ENCODE measurements at regions of chr11 and their contacts with region 1.

Region 1: DNA sequence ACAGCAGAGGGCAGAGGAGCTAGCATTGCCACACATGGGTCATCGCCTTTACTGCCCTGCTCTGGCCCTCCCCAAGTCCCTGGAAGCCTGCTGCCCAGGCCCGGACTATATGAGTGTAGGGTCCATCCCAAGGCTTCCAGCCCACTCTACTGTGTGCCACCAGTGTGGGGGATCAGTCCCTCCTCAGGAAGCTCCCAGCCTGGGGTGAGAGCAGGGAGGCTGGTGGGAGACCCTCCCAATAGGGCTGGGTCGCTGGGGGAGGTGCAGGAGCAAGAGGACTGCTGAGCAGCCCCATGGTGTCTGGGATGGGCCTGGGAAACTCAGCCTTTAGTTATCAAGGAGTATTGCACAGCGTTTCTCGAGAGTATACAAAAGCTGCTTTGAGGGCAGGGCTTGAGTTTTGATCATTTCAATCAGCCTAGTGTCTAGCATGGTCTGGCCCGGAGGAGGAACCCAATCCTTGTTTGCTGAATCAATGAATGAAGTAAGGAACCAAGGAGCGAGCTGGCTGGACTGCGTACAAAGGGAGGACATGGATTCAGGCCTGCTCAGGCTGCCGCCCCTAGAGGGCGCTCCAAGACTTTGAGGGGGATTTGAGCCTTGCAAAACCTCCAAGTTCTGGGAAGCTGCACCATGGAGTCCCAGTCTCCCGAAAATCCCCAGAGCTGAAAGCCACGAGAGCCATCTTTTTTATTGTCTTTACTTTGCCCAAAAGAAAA is 89.0 kb upstream of the PARVA start:
- DNase-seq: peak; percentile 65
- H3K4me3 Mint-ChIP-seq: no peak overlapping the region
- H3K27ac Mint-ChIP-seq: no peak overlapping the region
- H3K4me1 Mint-ChIP-seq: peaks cover 6% of the 10 kb centered on the region
- H3K27me3 Mint-ChIP-seq: no peaks in the 10 kb centered on the region

Region 2: DNA sequence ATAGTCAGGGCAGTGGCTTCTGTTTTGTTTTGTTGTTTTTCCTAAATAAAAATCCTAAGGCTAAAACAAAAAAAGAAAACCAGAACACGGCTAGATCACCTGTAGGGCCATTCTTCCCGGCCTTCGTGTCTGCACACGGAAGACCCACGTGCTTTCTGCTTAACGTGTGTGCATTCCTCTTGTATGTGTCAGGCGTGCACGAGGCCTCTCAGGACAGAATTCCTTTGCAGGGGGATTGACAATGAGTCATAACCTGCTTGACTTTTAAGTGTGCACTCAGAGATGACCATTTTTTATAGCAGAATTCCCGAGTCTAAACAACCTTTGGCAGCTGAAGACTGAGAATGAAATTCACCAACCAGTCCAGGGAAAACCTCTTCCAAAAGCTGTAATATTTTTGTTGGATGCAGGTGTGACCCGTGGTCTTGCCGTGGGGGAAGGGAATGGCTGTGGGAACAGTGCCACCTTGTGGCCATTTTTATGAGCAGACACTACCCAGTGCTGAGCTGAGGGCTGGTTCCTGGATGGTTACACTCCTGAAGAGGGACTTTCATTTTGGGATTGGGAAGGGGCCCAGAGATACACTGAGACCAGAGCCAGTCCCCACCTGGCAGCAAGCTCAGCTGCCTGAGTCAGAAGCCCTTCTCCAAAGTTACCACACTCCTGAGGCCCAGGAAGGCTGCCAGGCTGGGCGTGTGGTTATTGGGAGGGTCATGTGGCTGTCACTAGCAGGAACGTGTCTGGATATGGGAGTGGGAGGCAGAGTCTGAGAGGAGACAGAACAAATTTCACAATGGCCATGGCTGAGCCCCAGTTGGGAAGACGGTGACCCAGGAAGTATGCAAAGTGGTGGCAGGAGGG is 244.2 kb before region 1 on chr11:
- CTCF ChIA-PET with region 1: interaction called, 418 read pairs
- POLR2A ChIA-PET with region 1: no interaction called
- intact Hi-C with region 1: no loop called
- DNase-seq: peak; percentile 76
- H3K4me3 Mint-ChIP-seq: no peak overlapping the region
- H3K27ac Mint-ChIP-seq: no peak overlapping the region
- H3K4me1 Mint-ChIP-seq: peaks cover 4% of the 10 kb centered on the region
- H3K27me3 Mint-ChIP-seq: peaks cover 1% of the 10 kb centered on the region

Region 3: GRCh38 chr11:12052676-12053605 is 235.4 kb before region 1 on chr11:
- CTCF ChIA-PET with region 1: interaction called, 418 read pairs
- POLR2A ChIA-PET with region 1: no interaction called
- intact Hi-C with region 1: no loop called
- DNase-seq: peak; percentile 44
- H3K4me3 Mint-ChIP-seq: no peak overlapping the region
- H3K27ac Mint-ChIP-seq: no peak overlapping the region
- H3K4me1 Mint-ChIP-seq: no peaks in the 10 kb centered on the region
- H3K27me3 Mint-ChIP-seq: no peaks in the 10 kb centered on the region

Region 4: GRCh38 chr11:12087075-12088004 is 201.0 kb before region 1 on chr11:
- CTCF ChIA-PET with region 1: interaction called, 10 read pairs
- POLR2A ChIA-PET with region 1: no interaction called
- intact Hi-C with region 1: no loop called
- DNase-seq: peak; percentile 64
- H3K4me3 Mint-ChIP-seq: peak overlapping the region; percentile 13
- H3K27ac Mint-ChIP-seq: peak overlapping the region; percentile 68
- H3K4me1 Mint-ChIP-seq: peaks cover 60% of the 10 kb centered on the region
- H3K27me3 Mint-ChIP-seq: no peaks in the 10 kb centered on the region

Region 5: DNA sequence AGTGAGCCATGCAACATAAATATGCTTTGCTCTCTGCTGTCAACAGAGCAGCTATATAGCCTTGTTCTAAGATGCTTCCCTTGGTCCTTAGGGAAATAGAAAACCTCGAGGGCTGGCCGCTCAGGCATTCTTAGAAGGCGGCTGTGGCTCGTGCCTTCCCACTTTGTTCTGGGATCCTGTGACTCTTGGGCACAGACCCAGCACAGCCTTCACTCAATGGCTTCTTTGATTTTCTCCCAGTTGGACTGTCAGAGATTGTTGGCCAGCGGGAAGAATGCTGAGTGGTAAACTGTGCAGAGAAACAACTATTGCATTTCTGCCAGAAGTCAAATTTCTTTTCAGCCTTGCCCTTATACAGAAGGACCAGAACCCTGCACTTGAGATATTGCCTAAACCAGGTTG is 187.5 kb before region 1 on chr11:
- CTCF ChIA-PET with region 1: no interaction called
- POLR2A ChIA-PET with region 1: no interaction called
- intact Hi-C with region 1: no loop called
- DNase-seq: no peak
- H3K4me3 Mint-ChIP-seq: no peak overlapping the region
- H3K27ac Mint-ChIP-seq: no peak overlapping the region
- H3K4me1 Mint-ChIP-seq: peaks cover 7% of the 10 kb centered on the region
- H3K27me3 Mint-ChIP-seq: peaks cover 3% of the 10 kb centered on the region

Region 6: GRCh38 chr11:12331239-12331874 is 43.0 kb after region 1 on chr11:
- CTCF ChIA-PET with region 1: interaction called, 14 read pairs
- POLR2A ChIA-PET with region 1: no interaction called
- intact Hi-C with region 1: no loop called
- DNase-seq: peak; percentile 81
- H3K4me3 Mint-ChIP-seq: no peak overlapping the region
- H3K27ac Mint-ChIP-seq: no peak overlapping the region
- H3K4me1 Mint-ChIP-seq: peaks cover 5% of the 10 kb centered on the region
- H3K27me3 Mint-ChIP-seq: no peaks in the 10 kb centered on the region

Region 7: DNA sequence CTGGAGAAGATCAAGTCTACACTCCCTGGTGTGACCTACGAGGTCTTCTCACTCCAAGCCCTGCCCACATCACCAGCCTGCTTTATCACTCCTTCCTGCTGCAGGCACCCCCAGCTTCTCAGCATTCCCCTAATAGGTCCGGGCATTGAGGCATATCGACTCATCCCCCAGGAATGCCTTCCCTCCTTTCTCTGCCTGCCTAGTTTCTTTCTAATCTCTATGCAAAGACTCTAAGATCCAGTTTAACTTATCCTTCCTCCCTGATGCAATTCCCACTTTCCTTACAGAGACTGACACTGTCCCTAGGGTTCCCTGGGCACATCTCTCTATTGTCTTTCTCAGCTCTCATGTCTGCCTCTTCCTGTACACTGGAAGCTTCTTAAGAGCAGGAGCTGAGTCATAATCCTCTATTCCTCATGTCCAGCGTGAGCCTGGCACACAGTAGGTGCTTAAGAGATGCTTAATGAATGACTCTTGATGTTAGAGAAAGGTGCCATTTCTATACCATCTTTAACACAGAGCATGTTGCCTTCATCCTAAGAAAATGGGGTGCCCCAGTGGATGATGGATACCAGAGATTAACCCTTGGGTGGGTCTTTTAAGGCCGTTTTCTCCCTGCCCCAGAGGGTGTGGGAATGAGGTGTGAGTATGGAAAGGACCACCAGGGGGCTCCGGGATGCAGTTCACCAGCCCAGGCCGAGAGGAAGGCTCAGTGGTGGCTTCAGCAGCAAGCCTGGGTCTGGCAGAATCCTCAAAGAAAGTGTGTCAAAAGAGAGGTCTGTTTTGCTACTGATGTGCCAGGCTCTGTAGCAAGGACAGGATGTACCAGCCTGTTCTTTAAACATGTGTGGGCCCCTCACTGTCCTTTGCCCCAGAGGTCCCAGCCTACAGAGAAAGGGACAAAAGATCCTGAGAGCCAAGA is 123.7 kb after region 1 on chr11:
- CTCF ChIA-PET with region 1: no interaction called
- POLR2A ChIA-PET with region 1: no interaction called
- intact Hi-C with region 1: no loop called
- DNase-seq: peak; percentile 50
- H3K4me3 Mint-ChIP-seq: no peak overlapping the region
- H3K27ac Mint-ChIP-seq: no peak overlapping the region
- H3K4me1 Mint-ChIP-seq: no peaks in the 10 kb centered on the region
- H3K27me3 Mint-ChIP-seq: no peaks in the 10 kb centered on the region

Region 8: DNA sequence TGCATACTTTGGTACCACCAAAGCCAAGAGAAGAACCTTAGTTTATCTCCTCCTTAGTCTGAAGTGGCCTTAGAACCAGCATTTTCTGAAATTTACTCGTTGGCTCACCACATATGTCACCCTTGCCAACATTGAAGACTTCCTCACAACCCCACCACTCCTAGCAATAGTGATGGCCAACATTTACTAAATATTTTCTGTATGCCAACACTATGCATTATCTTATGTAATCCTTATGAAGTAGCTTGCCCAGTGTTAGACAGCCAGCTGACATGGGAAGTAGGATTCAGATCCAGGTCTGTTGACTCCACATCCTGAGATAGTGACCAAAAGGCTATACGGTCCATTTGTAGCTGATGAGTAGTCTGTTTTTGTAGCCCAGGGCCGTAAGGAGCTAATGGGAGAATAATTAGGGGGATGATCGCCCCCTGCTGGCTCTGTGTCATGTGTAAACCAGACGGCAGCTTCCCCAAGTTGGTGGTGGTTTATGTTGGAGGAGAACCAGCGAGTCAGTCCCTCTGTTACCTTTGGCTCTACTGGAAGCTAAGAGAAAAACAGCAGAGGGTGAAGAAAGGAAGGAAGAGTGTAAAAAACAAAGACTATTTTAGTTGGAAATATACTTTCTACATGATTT is 600.3 kb after region 1 on chr11:
- CTCF ChIA-PET with region 1: interaction called, 7 read pairs
- POLR2A ChIA-PET with region 1: no interaction called
- intact Hi-C with region 1: loop called (anchors 5 kb)
- DNase-seq: peak; percentile 77
- H3K4me3 Mint-ChIP-seq: no peak overlapping the region
- H3K27ac Mint-ChIP-seq: no peak overlapping the region
- H3K4me1 Mint-ChIP-seq: no peaks in the 10 kb centered on the region
- H3K27me3 Mint-ChIP-seq: peaks cover 3% of the 10 kb centered on the region

Measured in activated CD4-positive, alpha-beta memory T cell treated with anti-CD3 and anti-CD28 coated beads for 36 hours (primary cell).